Activated CD4-positive, alpha-beta T cell treated with anti-CD3 and anti-CD28 coated beads, Interleukin-2, amount 10 ng/mL, durations not matched to agents 24 days and 14 days (primary cell): ENCODE measurements at regions of chr20 and their contacts with region 1.

Region 1: DNA sequence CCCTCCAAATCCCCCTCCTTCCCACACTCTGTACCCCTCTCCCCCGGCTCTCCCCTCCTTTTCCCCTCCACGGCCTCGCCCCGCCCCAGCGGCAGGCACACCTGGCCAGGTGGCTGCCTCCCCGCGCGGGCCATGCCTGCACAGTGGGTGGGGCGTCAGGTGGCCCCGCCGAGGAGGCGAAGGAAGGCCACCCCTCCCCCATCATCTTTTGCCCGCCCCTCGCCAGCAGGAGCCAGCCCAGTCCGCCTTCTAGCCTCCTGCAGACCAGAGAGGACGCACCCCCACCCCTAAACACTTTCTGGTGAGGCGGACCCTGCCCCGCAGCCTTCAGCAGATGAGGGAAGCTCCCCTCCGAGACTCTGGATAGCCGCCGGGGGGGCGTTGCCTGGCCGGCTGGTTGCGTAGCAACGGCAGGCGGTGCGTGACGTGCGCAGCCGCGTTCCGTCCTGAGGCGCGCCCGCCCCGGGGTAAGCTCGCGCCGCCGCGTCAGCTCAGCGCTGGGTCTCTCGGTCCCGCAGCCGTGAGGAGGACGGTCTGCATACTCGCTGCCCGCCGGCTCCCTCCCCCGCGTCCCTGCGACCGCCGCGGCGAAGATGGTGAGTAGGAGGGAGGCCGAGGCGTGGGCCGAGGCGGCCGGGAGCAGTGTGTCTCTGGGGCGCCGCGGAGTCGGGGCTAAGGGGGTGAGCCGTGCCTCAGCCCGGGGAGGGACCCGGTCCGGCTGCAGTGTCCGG is at the start of gene DSTN:
- DNase-seq: peak; percentile 97
- H3K4me3 Mint-ChIP-seq: peak within 1 kb of the TSS; percentile 94
- H3K27ac Mint-ChIP-seq: peak within 1 kb of the TSS; percentile 95
- H3K4me1 Mint-ChIP-seq: peaks cover 23% of the 10 kb centered on the region
- H3K27me3 Mint-ChIP-seq: peaks cover 9% of the 10 kb centered on the region
- total RNA-seq, gene DSTN: 58.6 and 65.6 TPM in 2 replicates

Region 2: DNA sequence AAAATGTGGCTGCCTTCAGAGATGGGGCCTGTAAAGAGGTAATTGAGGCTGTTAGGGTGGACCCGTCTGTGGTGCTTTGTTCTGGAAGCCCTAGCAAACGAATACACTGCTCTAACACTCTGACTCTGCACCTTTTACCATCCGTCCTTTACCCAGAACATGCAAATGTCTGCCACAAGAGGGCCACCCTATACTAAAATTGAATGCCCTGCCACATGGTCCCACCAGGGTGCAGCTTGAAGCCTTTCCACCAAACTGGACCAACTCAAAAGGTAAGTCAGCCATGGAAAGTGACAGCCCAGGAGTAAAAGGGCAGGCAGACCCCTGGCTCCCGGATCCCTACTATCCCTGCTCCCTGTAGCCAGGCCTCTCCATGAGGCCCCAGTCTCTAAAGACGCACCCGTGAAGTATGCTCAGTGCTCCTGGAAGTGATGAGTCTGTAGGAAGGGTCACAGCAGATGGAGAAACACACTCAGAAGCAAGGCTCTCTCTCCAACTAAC is 32.8 kb before region 1 on chr20:
- intact Hi-C with region 1: loop called (anchors 1 kb)
- DNase-seq: peak; percentile 91
- H3K4me3 Mint-ChIP-seq: no peak overlapping the region
- H3K27ac Mint-ChIP-seq: no peak overlapping the region
- H3K4me1 Mint-ChIP-seq: peaks cover 26% of the 10 kb centered on the region
- H3K27me3 Mint-ChIP-seq: peaks cover 25% of the 10 kb centered on the region

Region 3: DNA sequence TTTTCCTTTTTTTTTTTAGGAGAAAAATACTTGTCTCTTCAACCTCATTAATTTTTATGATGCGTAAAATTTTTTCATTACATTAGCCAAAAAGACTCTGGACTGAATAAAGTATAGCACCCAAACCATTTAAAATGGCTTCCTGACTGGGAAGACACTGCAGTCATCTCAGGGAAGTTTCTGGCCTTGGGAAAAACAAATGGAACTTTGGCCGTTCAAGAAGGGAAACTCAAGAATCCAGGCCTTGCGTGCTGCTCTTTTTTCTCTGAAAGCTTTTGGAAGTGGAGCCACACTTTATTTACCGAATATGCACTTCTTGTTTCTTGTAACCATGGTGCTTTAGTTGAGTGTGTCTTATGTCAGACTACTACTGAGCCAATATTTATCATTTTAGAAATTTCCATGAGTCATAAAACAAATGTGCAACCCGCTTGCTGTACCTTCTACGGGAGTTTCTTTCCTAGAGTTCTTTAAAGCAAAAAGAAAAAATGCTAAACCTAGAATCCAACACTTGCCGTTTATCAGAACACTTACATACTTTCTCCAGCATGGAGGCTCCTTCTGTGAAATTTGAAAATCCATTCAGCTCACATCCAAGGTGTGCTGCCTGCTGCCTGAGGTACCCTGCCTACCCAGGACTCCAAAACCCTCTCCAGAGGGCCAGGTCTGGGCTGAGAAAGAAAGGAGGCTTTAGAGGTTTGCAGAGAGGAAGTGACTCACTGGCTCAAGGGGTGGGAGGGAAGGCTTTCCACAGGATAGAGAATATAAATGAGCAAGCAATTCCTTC is 11.4 kb before region 1 on chr20:
- intact Hi-C with region 1: loop called (anchors 1 kb)
- DNase-seq: peak; percentile 71
- H3K4me3 Mint-ChIP-seq: peak overlapping the region; percentile 74
- H3K27ac Mint-ChIP-seq: peak overlapping the region; percentile 97
- H3K4me1 Mint-ChIP-seq: peaks cover 36% of the 10 kb centered on the region
- H3K27me3 Mint-ChIP-seq: no peaks in the 10 kb centered on the region

Region 4: DNA sequence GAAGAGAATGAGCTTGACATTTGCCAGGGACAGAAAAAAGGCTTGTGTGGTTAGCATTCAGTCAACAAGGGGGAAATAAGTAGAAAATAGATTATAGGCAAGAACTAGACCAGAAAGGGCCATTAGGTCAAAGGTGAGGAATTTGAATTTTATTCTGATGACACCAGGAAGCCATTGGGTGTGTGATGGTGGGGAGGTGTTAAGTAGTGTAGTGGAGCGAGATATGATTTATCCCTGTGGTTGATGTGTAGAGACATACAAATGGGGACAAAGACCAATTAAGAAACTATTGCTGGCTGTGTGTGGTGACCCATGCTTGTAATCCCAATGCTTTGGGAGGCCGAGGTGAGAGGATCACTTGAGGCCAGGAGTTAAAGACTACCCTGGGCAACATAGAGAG is 11.1 kb after region 1 on chr20:
- intact Hi-C with region 1: loop called (anchors 1 kb)
- DNase-seq: no peak
- H3K4me3 Mint-ChIP-seq: no peak overlapping the region
- H3K27ac Mint-ChIP-seq: no peak overlapping the region
- H3K4me1 Mint-ChIP-seq: peaks cover 15% of the 10 kb centered on the region
- H3K27me3 Mint-ChIP-seq: no peaks in the 10 kb centered on the region

Region 5: GRCh38 chr20:17611540-17612286 is 41.9 kb after region 1 on chr20:
- intact Hi-C with region 1: loop called (anchors 5 kb)
- DNase-seq: no peak
- H3K4me3 Mint-ChIP-seq: no peak overlapping the region
- H3K27ac Mint-ChIP-seq: peak overlapping the region; percentile 95
- H3K4me1 Mint-ChIP-seq: peaks cover 24% of the 10 kb centered on the region
- H3K27me3 Mint-ChIP-seq: no peaks in the 10 kb centered on the region